ENCODE measurements at regions of chr3 and their contacts with region 1.

Region 1: GRCh38 chr3:31423482-31423881 is 109.2 kb upstream of the STT3B start:
- DNase-seq: no peak
- H3K4me3 Mint-ChIP-seq: no peak overlapping the region
- H3K27ac Mint-ChIP-seq: no peak overlapping the region
- H3K4me1 Mint-ChIP-seq: peaks cover 15% of the 10 kb centered on the region
- H3K27me3 Mint-ChIP-seq: peaks cover 3% of the 10 kb centered on the region

Region 2: GRCh38 chr3:31247850-31248562 is 175.5 kb before region 1 on chr3:
- intact Hi-C with region 1: no loop called
- DNase-seq: no peak
- H3K4me3 Mint-ChIP-seq: no peak overlapping the region
- H3K27ac Mint-ChIP-seq: peak overlapping the region; percentile 75
- H3K4me1 Mint-ChIP-seq: peaks cover 51% of the 10 kb centered on the region
- H3K27me3 Mint-ChIP-seq: no peaks in the 10 kb centered on the region

Region 3: DNA sequence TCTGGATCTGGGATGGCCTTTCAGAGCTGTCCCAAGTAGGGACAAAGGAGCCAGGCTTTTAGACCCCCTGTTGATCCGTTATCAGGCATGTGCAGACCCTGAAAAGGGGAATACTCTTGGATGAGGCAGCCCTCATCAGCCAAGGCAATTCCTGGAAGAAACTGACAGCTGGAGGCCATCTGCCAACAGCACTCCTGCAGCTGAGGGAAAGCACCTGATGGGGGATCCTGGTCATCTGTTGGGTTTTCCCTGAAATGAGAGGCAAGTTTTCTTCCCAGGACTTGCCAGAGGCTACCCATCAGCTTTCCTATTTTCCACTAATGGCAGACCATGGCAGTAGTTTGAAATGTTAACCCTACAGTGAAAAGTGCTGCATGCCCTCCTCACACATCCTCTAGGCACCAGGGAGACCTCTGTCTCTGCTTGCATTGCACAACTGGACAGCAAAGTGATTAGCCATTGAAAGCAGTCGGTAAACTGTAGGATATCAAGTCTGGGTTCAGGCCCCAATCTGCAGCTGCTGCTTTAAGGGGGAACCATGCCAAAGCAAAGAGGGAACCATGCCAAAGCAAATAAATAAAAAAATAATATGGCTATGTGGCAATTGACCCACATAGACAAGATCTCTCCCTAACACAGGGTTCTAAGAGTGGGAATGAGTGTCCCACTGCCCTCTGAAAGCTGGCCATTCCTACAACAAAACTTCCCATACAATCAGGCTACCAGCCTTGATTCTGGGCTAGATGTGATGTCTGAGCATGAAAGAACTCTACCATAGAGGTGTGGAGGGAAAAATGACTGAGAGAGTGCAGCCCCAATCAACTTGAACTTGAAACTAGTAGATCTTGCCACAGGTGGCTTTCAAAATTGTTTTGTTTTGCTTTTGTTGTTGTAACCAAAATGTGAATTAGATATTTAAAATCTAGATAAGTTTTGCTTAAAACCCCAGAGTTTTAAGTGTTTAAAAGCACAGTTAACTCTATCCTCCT is 122.7 kb before region 1 on chr3:
- intact Hi-C with region 1: no loop called
- DNase-seq: no peak
- H3K4me3 Mint-ChIP-seq: no peak overlapping the region
- H3K27ac Mint-ChIP-seq: no peak overlapping the region
- H3K4me1 Mint-ChIP-seq: peaks cover 8% of the 10 kb centered on the region
- H3K27me3 Mint-ChIP-seq: peaks cover 3% of the 10 kb centered on the region

Region 4: GRCh38 chr3:31399271-31399670 is 24.2 kb before region 1 on chr3:
- intact Hi-C with region 1: loop called (anchors 2 kb)
- DNase-seq: no peak
- H3K4me3 Mint-ChIP-seq: no peak overlapping the region
- H3K27ac Mint-ChIP-seq: peak overlapping the region; percentile 7
- H3K4me1 Mint-ChIP-seq: peaks cover 16% of the 10 kb centered on the region
- H3K27me3 Mint-ChIP-seq: no peaks in the 10 kb centered on the region

Region 5: DNA sequence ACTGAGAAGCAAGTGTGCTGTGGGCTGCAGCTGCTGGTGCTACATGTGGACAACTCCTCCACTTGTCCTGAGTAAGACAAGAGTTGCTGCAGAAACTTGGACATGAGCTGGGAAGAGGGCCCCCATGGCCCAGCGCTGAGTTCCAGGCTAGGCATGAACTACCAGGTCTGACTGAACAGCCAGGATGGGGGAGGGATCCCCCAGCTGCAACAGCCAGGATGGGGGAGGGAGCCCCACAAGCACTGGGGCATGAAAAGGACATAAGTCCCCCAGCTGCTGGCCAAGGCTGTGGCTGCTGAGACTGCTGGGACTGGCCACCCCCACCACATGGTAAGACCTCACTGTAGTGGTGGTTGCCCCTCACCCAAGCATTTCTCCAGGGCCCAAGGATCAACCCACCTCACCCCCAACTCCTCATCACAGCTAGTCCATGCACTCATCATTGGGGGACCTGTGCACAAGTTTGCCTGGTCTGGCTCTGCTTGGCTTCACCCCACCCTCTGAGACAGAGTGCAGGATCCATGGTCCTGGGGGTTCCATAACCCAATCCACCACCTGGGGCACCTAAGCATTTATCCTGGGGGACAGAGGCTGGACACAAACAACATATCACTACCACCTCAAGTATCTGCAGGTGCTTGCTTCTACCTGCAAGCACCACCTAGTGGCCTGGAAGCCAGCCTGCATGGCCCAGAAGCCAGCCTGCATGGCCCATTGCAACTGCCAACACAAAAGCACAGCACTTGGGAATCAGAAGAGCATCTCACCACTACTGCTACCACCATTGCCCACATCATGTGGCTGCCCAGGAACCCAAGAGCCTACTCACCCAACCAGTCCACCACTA is 24.8 kb after region 1 on chr3:
- intact Hi-C with region 1: loop called (anchors 2 kb)
- DNase-seq: peak; percentile 4
- H3K4me3 Mint-ChIP-seq: no peak overlapping the region
- H3K27ac Mint-ChIP-seq: peak overlapping the region; percentile 13
- H3K4me1 Mint-ChIP-seq: peaks cover 30% of the 10 kb centered on the region
- H3K27me3 Mint-ChIP-seq: peaks cover 3% of the 10 kb centered on the region

Measured in activated T-helper 1 cell treated with anti-CD3 and anti-CD28 coated beads, Interleukin-12 subunit alpha, Interleukin-12 subunit beta, Interleukin-2, Interleukin-4 antibody, amounts not matched to agents 30 ng/mL and 10 ng/mL and 1 ng/mL, durations not matched to agents 14 hours and 24 hours and 36 hours (primary cell).